ENCODE measurements at regions of chr1 and their contacts with region 1.

Region 1: DNA sequence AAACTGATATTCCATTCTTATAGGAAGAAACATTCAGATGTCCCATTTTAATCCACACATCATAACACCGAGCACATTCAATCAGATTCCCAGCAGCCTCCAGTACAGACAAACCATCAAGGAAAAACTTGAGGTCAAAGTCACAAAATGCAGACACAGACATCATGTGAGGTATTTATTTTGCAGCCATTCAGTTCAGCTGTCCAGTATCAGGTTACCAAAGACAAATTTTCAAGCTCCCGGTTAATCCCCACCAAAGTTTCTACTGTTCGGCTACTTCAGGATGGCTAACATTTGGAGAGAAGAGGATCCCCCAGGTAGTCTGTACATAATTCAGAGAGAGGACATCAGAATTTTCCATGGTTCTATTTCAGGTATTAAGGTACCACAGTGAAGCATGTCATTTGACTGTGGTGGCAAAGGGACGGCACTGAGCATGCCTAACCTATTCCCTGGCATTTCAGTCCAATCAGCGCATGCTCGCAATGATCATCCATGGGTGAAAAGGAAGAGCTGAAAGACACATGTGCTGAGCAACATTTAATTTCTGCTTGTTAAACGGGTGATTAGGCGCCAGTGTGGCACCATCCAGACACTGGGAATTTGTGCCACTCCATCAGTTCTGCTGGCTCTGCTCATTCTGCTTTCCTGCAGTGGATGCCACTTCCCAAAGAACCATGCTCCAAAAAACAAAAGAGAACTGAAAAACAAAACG is 13.6 kb upstream of the NDC1 start:
- DNase-seq: no peak
- H3K4me3 ChIP-seq: no peak overlapping the region
- H3K27ac ChIP-seq: no peak overlapping the region
- H3K4me1 ChIP-seq: no peaks in the 10 kb centered on the region
- H3K27me3 ChIP-seq: no peaks in the 10 kb centered on the region
- CTCF ChIP-seq: no peak
- EP300 ChIP-seq: no peak
- POLR2A ChIP-seq: no peak

Region 2: GRCh38 chr1:53959664-53960250 is 108.0 kb after region 1 on chr1:
- intact Hi-C with region 1: loop called in 1 of 4 experiments (anchors 10 kb)
- DNase-seq: no peak
- H3K4me3 ChIP-seq: no peak overlapping the region
- H3K27ac ChIP-seq: no peak overlapping the region
- H3K4me1 ChIP-seq: no peaks in the 10 kb centered on the region
- H3K27me3 ChIP-seq: no peaks in the 10 kb centered on the region
- CTCF ChIP-seq: no peak
- EP300 ChIP-seq: no peak
- POLR2A ChIP-seq: no peak

Measured in ovary (tissue), 10 donors.